GM12878 (cell line): ENCODE measurements at regions of chr6 and their contacts with region 1.

Region 1: GRCh38 chr6:138007014-138007472 is 100.2 kb downstream of the PERP start:
- DNase-seq: no peak
- ATAC-seq: peak; percentile 63
- H3K4me3 ChIP-seq: no peak overlapping the region
- H3K27ac ChIP-seq: no peak overlapping the region
- H3K4me1 ChIP-seq: no peaks in the 10 kb centered on the region
- H3K27me3 ChIP-seq: no peaks in the 10 kb centered on the region
- CTCF ChIP-seq: peak; percentile 57 to 78 (median 72)
- EP300 ChIP-seq: no peak
- POLR2A ChIP-seq: no peak
- RAD21 ChIP-seq: peak; percentile 53

Region 2: GRCh38 chr6:137783710-137784109 is 223.3 kb before region 1 on chr6:
- CTCF ChIA-PET with region 1: no interaction called
- POLR2A ChIA-PET with region 1: no interaction called
- RAD21 ChIA-PET with region 1: no interaction called
- SMC1A ChIA-PET with region 1: no interaction called
- in situ Hi-C with region 1: no loop called
- intact Hi-C with region 1: no loop called
- DNase-seq: no peak
- ATAC-seq: no peak
- H3K4me3 ChIP-seq: no peak overlapping the region
- H3K27ac ChIP-seq: no peak overlapping the region
- H3K4me1 ChIP-seq: no peaks in the 10 kb centered on the region
- H3K27me3 ChIP-seq: no peaks in the 10 kb centered on the region
- CTCF ChIP-seq: no peak
- EP300 ChIP-seq: no peak
- POLR2A ChIP-seq: no peak
- RAD21 ChIP-seq: no peak

Region 3: DNA sequence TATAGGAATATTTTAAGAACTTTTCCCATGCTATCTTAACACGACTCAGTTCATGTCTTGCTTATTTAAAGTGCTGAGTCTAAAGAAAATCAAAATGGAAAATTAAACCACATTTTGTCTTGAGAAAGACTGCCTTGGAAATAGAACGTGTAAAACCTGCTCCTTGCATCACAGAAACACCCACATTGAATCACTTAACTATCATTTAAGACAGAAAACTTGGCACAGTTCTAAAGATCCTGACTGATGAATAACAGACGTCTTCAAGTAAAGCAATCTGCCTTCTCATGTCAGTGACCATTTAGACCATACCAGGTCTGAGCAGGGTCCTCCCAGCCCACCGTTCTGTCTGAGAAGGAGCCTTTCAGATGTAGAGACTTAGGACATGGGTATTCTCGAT is 92.8 kb after region 1 on chr6:
- CTCF ChIA-PET with region 1: interaction called, 52 read pairs
- POLR2A ChIA-PET with region 1: no interaction called
- RAD21 ChIA-PET with region 1: interaction called, 24 read pairs
- SMC1A ChIA-PET with region 1: interaction called, 27 read pairs
- in situ Hi-C with region 1: no loop called
- intact Hi-C with region 1: no loop called
- DNase-seq: no peak
- ATAC-seq: no peak
- H3K4me3 ChIP-seq: no peak overlapping the region
- H3K27ac ChIP-seq: no peak overlapping the region
- H3K4me1 ChIP-seq: no peaks in the 10 kb centered on the region
- H3K27me3 ChIP-seq: peaks cover 0 to under 1% of the 10 kb centered on the region in 2 experiments; a peak in 3 of 4 replicates
- CTCF ChIP-seq: no peak
- EP300 ChIP-seq: no peak
- POLR2A ChIP-seq: no peak
- RAD21 ChIP-seq: no peak

Region 4: DNA sequence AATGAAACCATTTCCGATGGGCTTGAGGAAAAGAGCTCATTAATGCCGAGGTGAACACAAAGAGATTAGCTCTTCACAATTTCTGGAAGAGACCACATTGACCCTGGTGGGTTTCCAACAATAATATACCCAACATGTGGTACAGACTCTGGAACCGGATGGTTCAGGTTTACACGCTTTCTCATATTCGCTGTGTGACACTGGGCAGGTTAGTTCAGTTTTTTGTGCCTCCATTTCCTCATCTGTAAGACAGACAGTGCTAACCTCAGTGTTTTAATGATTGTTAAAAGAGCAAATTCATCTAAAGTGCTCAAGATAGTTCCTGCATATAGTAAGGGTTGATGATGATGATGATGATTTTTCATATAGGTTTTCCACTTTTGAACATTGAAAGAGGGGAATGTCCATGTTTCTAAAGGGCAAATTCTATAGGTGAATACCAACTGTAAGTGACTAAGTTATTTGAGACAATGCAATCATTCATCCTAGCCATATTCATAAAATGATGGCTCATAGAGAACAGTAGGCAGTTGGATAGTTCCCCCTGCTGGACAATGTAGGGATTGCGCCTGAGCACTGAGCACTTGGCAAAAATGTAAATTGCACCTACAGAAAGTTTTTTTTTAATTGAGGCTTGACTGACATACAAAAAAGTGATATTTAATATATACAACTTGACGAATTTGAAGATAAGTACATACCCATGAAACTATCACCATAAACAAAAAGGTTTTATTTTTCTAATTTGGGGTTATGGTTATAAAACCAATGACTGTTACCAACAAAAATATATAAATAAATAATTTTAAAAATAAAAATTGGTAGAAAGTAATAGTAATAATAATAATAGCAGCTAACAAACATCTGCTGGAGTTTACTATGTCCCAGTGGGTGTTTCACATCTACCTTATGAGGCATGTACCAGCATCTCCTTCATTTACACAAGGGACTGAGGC is 102.3 kb after region 1 on chr6:
- CTCF ChIA-PET with region 1: interaction called, 52 read pairs
- POLR2A ChIA-PET with region 1: interaction called, 4 read pairs
- RAD21 ChIA-PET with region 1: interaction called, 37 read pairs
- SMC1A ChIA-PET with region 1: interaction called, 62 read pairs
- in situ Hi-C with region 1: loop called (anchors 5 kb)
- intact Hi-C with region 1: no loop called
- DNase-seq: peak; percentile 21
- ATAC-seq: peak; percentile 52
- H3K4me3 ChIP-seq: no peak overlapping the region
- H3K27ac ChIP-seq: no peak overlapping the region
- H3K4me1 ChIP-seq: 0 out of 2 replicates have a peak, but pooled peaks cover 5% of the 10 kb centered on the region
- H3K27me3 ChIP-seq: peaks cover 2 to 31% of the 10 kb centered on the region in 2 experiments
- CTCF ChIP-seq: peak; percentile 84 to 94 (median 91)
- EP300 ChIP-seq: no peak
- POLR2A ChIP-seq: no peak
- RAD21 ChIP-seq: peak; percentile 88

Region 5: DNA sequence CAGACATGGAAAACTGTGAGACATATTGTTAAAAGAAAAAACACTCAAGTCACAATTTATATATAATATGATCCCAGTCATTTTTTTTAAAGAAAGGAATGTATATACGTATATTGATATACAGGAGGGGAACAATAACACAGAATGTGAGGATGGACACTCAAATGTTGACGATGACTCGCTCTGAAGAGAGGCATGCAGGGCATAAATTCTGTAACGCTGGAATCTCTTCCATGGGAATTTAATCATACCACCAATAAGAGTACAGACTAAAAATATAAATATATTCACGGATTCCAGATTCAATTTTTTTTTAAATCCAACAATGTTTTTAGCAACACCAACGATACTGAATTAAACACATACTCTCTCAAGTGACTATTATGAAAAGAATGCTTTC is 659.6 kb after region 1 on chr6:
- CTCF ChIA-PET with region 1: no interaction called
- POLR2A ChIA-PET with region 1: no interaction called
- RAD21 ChIA-PET with region 1: no interaction called
- SMC1A ChIA-PET with region 1: no interaction called
- in situ Hi-C with region 1: no loop called
- intact Hi-C with region 1: no loop called
- DNase-seq: no peak
- ATAC-seq: no peak
- H3K4me3 ChIP-seq: no peak overlapping the region
- H3K27ac ChIP-seq: no peak overlapping the region
- H3K4me1 ChIP-seq: no peaks in the 10 kb centered on the region
- H3K27me3 ChIP-seq: peaks cover 0 to 3% of the 10 kb centered on the region in 2 experiments; a peak in 1 of 4 replicates
- CTCF ChIP-seq: no peak
- EP300 ChIP-seq: no peak
- POLR2A ChIP-seq: no peak
- RAD21 ChIP-seq: no peak